ENCODE measurements at regions of chr6 and their contacts with region 1.

Region 1: DNA sequence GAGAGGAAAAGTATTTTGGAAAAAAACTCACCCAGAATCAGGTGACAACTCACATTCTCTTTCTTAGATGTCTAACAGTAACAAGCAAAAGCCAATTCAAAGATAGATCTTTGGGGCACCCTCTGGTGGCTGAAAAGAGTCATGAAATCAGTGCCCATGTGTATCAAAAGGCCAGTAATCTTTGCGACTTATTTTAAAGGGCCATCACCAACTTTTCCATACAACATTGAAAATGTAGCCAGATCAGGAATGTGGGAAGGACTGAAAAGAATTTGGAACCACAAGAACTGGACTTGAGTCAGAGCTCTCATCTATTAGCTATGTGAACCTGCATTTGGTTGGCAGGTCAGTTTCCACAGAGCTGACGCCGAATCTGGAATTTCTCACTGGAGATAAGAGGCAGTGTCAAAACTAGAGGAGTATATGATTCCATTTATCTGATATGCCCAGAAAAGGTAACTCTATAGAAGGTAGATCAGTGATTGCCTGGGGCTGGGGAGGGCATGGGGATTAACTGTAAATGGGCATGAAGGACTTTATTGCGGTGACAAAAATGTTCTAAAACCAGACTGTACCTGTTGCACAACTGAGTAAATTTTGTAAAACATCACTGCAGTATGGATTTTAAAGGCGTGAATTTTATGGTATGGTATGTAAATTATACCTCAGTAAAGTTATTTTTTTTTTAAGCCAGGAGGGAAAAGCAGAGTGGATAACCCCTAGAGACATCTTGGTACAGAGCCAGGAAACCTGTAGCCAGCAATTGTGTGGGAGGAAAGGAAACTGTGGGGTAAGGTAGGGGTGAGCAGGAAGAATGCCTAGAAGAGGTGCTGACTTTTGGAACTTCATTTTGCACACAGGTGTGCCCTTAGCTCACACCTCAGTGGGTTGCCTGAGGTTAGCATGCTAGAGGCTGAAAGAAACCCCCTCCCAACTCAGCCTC is 117.1 kb upstream of the ASF1A start:
- DNase-seq: peak; percentile 85
- H3K4me3 ChIP-seq: no peak overlapping the region
- H3K27ac ChIP-seq: no peak overlapping the region
- H3K27me3 ChIP-seq: no peaks in the 10 kb centered on the region
- CTCF ChIP-seq: peak; percentile 77

Region 2: GRCh38 chr6:118283766-118284165 is 493.1 kb before region 1 on chr6:
- in situ Hi-C with region 1: loop called (anchors 25 kb)
- DNase-seq: peak; percentile 51
- H3K4me3 ChIP-seq: no peak overlapping the region
- H3K27ac ChIP-seq: no peak overlapping the region
- H3K27me3 ChIP-seq: no peaks in the 10 kb centered on the region
- CTCF ChIP-seq: peak; percentile 85